ENCODE measurements at regions of chr11 and their contacts with region 1.

Region 1: DNA sequence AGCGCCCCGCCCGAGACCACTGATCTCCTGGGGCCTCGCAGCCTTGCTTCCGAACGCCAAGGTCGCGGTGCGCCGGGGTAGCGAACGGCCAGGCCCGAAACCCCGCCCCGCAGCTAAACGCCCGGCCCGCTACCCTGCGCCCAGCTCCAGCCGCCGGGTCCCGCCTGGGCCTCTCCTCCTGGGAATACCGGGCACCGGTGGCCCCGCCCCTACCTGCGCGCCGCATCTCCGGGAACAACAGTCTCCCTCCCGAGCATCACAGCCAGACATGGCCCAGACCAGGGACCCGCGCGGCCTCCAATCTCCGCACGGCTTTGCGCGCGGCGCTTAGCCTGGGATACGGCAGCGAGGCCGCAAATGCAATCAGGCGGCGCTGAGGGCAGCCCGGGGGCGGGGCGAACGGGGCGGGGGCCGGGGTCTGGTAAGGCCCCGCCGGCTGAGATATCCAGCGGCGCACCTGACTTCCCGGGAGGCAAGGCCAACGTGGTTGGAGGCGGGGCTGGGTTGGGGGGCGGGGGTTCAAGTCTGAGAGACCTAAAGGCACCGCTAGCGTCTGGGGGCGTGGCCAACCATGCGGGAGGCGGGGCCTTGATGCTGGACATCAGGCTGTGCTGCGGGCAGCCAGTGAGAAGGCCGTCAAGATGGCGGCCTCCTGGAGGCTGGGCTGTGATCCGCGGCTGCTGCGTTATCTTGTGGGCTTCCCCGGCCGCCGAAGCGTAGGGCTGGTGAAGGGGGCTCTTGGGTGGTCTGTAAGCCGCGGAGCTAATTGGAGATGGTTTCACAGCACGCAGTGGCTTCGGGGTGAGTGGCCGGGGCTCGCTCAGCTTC is at the starts of genes APIP and PDHX:
- DNase-seq: peak; percentile 98
- H3K4me3 ChIP-seq: peak within 1 kb of the TSS; percentile 67 to 89 (median 80)
- H3K27ac ChIP-seq: peak within 1 kb of the TSS; percentile 88
- H3K4me1 ChIP-seq: peaks cover 15% of the 10 kb centered on the region
- H3K27me3 ChIP-seq: no peaks in the 10 kb centered on the region
- CTCF ChIP-seq: no peak
- POLR2A ChIP-seq: peak; percentile 98
- total RNA-seq, gene APIP: 25.9 and 26.9 TPM in 2 replicates
- total RNA-seq, gene PDHX: 30.5 and 33.2 TPM in 2 replicates

Region 2: GRCh38 chr11:34667810-34668582 is 248.2 kb before region 1 on chr11:
- CTCF ChIA-PET with region 1: no interaction called
- POLR2A ChIA-PET with region 1: no interaction called
- dilution Hi-C with region 1: no loop called
- intact Hi-C with region 1: no loop called
- DNase-seq: no peak
- H3K4me3 ChIP-seq: no peak overlapping the region
- H3K27ac ChIP-seq: no peak overlapping the region
- H3K4me1 ChIP-seq: no peaks in the 10 kb centered on the region
- H3K27me3 ChIP-seq: peaks cover 0 to 4% of the 10 kb centered on the region in 2 experiments
- CTCF ChIP-seq: no peak
- POLR2A ChIP-seq: no peak

Region 3: DNA sequence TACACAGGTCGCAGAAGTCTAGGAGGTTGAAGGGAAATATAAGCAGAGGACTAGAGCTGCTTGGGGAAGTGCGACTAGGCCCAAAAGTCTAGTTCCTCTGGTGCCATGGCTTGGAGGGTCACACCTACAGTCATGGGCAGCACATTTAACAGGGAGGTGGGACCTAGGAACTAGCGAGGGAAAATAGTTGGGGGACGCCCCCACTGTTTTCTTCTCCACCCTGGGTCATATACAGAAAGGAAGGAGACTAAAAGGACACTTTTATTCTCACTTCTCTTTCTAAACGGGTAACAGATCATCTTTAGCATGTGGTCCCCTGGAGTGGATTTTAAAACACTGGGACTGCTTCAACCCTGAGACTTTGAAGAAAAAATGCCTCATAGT is 16.6 kb before region 1 on chr11:
- CTCF ChIA-PET with region 1: no interaction called
- POLR2A ChIA-PET with region 1: no interaction called
- dilution Hi-C with region 1: no loop called
- intact Hi-C with region 1: no loop called
- DNase-seq: no peak
- H3K4me3 ChIP-seq: no peak overlapping the region
- H3K27ac ChIP-seq: no peak overlapping the region
- H3K4me1 ChIP-seq: no peaks in the 10 kb centered on the region
- H3K27me3 ChIP-seq: no peaks in the 10 kb centered on the region
- CTCF ChIP-seq: no peak
- POLR2A ChIP-seq: no peak

Region 4: GRCh38 chr11:34977089-34977906 is 61.1 kb after region 1 on chr11:
- CTCF ChIA-PET with region 1: no interaction called
- POLR2A ChIA-PET with region 1: no interaction called
- dilution Hi-C with region 1: no loop called
- intact Hi-C with region 1: loop called (anchors 2 kb)
- DNase-seq: peak; percentile 79
- H3K4me3 ChIP-seq: peak overlapping the region in 2 of 3 experiments; percentile 23 to 42
- H3K27ac ChIP-seq: peak overlapping the region; percentile 75
- H3K4me1 ChIP-seq: peaks cover 41% of the 10 kb centered on the region
- H3K27me3 ChIP-seq: no peaks in the 10 kb centered on the region
- CTCF ChIP-seq: no peak
- POLR2A ChIP-seq: no peak

Region 5: DNA sequence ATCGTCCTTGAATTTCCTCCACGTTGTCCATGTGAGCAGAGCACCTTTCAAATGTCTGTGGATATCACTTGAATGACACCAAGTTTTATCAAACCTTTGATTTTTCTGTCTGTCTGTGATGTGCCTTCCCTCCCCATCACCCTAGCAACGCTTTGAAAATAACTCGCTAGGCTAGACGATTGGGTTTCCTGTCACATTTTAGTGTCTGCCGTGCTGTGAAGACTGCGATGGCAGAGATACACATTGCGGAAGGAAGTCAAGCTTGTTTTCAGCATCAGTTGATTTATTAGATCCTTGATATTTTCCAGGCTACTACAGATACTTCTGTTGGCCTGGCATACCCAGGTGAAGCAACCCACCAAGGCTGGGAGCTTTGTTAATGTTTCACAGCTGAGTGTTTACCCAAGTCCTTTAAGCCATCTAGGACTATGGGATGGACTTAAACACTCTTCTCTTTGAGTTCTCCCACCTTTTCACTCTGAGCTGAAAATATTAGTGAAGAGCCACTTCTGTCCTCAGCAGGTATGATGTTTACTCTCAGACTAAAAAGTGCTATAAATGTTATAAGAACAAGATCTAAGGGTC is 129.1 kb after region 1 on chr11:
- CTCF ChIA-PET with region 1: no interaction called
- POLR2A ChIA-PET with region 1: no interaction called
- dilution Hi-C with region 1: no loop called
- intact Hi-C with region 1: no loop called
- DNase-seq: no peak
- H3K4me3 ChIP-seq: no peak overlapping the region
- H3K27ac ChIP-seq: no peak overlapping the region
- H3K4me1 ChIP-seq: no peaks in the 10 kb centered on the region
- H3K27me3 ChIP-seq: peaks cover 0 to 7% of the 10 kb centered on the region in 2 experiments
- CTCF ChIP-seq: no peak
- POLR2A ChIP-seq: no peak

Measured in endothelial cell of umbilical vein (primary cell).